Mammary epithelial cell (primary cell): ENCODE measurements at regions of chr17 and their contacts with region 1.

Region 1: GRCh38 chr17:81840826-81841778 is 6.3 kb upstream of the PPP1R27 start:
- DNase-seq: peak; percentile 87
- H3K4me3 ChIP-seq: peak overlapping the region in 2 of 3 experiments; percentile 18 to 29
- H3K27ac ChIP-seq: peak overlapping the region; percentile 37
- H3K4me1 ChIP-seq: peaks cover 35% of the 10 kb centered on the region
- H3K27me3 ChIP-seq: no peaks in the 10 kb centered on the region
- CTCF ChIP-seq: no peak

Region 2: GRCh38 chr17:81683584-81684237 is 157.4 kb before region 1 on chr17 and contains the starts of genes ARL16 and HGS:
- CTCF ChIA-PET with region 1: no interaction called
- dilution Hi-C with region 1: loop called (anchors 5 kb)
- in situ Hi-C with region 1: no loop called
- intact Hi-C with region 1: no loop called
- DNase-seq: peak; percentile 99
- H3K4me3 ChIP-seq: peak within 1 kb of the TSS; percentile 76 to 94 (median 92)
- H3K27ac ChIP-seq: peak within 1 kb of the TSS; percentile 78
- H3K4me1 ChIP-seq: peaks cover 19% of the 10 kb centered on the region
- H3K27me3 ChIP-seq: no peaks in the 10 kb centered on the region
- CTCF ChIP-seq: no peak
- total RNA-seq, gene ARL16: 19.5 to 27.7 TPM
- total RNA-seq, gene HGS: 88.0 to 140 TPM

Region 3: DNA sequence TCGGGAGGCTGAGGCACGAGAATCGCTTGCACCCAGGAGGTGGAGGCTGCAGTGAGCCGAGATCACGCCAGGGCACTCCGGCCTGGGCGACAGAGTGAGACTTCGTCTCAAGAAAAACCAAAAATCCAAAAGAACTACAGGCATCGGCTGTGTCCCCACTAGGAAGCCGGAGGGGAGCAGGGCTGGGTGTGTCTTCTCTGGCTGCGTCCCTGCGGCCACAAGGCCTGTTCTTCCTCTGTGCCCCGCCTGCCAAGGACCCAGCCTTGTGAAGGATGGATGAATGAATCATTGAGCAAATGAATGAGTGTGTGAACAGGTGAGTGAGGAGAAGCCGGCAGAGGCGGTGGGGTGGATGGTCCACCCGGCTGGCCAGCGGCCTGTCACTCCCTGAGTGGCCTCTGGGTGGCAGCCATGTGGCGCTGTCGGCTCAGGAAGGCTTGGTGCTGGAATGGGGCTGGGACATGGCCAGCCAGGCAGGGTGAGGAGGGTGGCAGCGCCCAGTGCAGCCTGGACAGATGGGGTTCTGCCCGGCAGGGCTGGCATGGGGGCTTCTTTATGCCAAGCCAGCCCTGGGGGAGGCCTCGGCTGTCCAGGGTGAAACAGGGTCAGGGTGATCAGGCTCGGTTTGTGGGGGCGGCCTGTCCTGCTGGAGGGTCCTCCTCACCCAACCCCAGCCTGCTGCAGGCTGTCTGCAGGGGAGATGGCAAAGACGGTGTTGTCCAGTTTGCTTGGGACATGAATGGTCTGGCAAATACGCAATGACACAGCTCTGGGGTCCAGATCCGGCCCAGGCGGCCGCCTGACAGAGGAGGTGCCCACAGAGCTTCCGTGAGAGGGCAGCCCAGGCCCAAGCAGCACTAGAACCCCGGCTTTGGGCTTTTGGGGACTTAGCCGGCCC is 107.3 kb before region 1 on chr17:
- CTCF ChIA-PET with region 1: no interaction called
- dilution Hi-C with region 1: no loop called
- in situ Hi-C with region 1: no loop called
- intact Hi-C with region 1: loop called (anchors 1 kb)
- DNase-seq: peak; percentile 63
- H3K4me3 ChIP-seq: no peak overlapping the region
- H3K27ac ChIP-seq: no peak overlapping the region
- H3K4me1 ChIP-seq: peaks cover 11% of the 10 kb centered on the region
- H3K27me3 ChIP-seq: no peaks in the 10 kb centered on the region
- CTCF ChIP-seq: peak; percentile 80 to 96

Region 4: GRCh38 chr17:81860756-81861518 is 19.8 kb after region 1 on chr17:
- CTCF ChIA-PET with region 1: no interaction called
- dilution Hi-C with region 1: no loop called
- in situ Hi-C with region 1: no loop called
- intact Hi-C with region 1: loop called (anchors 2 kb)
- DNase-seq: peak; percentile 100
- H3K4me3 ChIP-seq: peak overlapping the region; percentile 52 to 94 (median 79)
- H3K27ac ChIP-seq: peak overlapping the region; percentile 74
- H3K4me1 ChIP-seq: peaks cover 27% of the 10 kb centered on the region
- H3K27me3 ChIP-seq: no peaks in the 10 kb centered on the region
- CTCF ChIP-seq: no peak

Region 5: DNA sequence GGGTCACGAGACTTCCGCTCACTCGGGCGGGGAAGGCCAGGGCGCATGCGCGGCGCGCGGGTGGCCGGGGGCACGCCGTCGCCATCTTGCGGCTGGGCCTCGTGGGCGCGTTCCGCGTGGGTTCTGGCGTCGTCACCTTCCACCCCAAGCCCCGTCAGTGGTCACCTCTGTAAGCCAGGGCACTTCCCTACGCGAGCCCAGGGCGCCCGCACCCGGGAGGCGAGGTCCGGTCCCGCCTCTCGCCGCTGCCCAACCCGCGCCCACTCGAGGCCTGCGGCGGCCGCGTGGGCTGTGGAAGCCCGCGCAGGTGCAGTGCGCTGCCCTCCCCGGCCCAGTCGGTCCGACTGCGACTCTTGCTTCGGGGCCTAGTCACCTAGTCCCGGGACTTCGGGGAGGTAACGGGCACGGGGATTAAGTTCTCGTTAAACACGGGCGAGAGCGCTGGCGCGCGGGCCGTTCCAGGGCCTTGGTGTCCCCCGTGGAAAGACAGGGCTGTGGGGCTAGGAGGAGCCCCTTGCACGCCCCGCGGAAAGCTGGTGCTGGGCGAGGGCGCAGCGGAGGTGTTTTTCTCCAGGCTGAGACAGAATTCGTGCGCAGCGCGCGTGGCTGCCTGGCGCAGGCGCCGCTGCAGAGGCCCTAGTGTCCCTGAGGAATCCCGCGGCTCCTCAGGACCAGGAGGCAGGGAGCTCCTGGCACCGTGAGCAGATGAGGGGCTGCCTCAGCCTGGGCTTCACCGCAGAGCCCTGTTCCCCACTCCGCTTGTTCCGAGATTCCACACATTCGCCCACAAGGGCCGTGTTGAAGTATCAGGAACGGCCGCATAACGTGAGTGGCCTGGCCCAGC is 30.5 kb after region 1 on chr17:
- CTCF ChIA-PET with region 1: no interaction called
- dilution Hi-C with region 1: no loop called
- in situ Hi-C with region 1: no loop called
- intact Hi-C with region 1: no loop called
- DNase-seq: peak; percentile 82
- H3K4me3 ChIP-seq: peak overlapping the region; percentile 64 to 88 (median 75)
- H3K27ac ChIP-seq: peak overlapping the region; percentile 86
- H3K4me1 ChIP-seq: peaks cover 33% of the 10 kb centered on the region
- H3K27me3 ChIP-seq: no peaks in the 10 kb centered on the region
- CTCF ChIP-seq: peak in 1 of 2 donors; percentile 42

Region 6: DNA sequence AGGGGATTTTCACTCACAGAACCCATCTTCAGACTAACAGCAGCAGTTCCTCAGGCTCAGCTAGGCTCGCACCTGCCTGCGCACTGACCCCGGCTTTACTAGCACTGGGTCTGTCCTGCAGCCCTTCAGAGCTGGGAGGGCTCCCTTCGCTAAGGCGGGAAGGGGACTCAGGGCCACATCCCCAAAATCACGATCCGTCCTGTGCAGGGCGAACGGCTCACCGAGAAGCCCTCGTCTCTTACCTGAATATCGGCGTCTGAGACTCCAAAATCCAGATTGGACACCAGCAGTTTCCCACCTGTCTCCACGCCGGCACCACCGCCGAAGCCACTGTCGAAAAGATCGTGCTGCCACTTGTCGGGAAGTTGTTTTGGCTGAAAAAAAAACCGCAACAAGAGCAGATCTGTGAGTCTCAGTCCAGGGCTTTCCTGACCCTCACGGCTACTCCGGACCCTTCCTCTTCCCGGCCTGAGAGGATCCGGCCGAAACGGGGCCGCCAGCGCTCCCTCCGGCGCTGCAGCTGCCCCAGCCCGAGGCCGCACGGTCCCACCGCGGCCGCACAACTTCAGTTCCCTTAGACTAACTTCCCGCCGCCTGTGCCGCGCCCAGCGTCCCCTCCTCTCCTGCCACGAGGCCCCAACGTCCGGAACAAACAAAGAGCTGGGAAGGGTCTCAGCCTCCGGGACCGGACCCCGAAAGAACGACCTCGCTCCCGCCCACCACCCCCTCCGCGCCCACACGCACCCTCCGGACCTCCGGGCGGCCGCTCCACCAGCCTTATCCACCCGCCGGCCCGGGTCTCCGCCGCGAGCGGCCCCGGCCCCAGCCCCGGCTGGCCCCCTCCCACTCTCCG is 49.6 kb after region 1 on chr17:
- CTCF ChIA-PET with region 1: no interaction called
- dilution Hi-C with region 1: no loop called
- in situ Hi-C with region 1: no loop called
- intact Hi-C with region 1: no loop called
- DNase-seq: no peak
- H3K4me3 ChIP-seq: peak overlapping the region; percentile 80 to 88 (median 87)
- H3K27ac ChIP-seq: peak overlapping the region; percentile 77
- H3K4me1 ChIP-seq: peaks cover 21% of the 10 kb centered on the region
- H3K27me3 ChIP-seq: no peaks in the 10 kb centered on the region
- CTCF ChIP-seq: no peak

Region 7: DNA sequence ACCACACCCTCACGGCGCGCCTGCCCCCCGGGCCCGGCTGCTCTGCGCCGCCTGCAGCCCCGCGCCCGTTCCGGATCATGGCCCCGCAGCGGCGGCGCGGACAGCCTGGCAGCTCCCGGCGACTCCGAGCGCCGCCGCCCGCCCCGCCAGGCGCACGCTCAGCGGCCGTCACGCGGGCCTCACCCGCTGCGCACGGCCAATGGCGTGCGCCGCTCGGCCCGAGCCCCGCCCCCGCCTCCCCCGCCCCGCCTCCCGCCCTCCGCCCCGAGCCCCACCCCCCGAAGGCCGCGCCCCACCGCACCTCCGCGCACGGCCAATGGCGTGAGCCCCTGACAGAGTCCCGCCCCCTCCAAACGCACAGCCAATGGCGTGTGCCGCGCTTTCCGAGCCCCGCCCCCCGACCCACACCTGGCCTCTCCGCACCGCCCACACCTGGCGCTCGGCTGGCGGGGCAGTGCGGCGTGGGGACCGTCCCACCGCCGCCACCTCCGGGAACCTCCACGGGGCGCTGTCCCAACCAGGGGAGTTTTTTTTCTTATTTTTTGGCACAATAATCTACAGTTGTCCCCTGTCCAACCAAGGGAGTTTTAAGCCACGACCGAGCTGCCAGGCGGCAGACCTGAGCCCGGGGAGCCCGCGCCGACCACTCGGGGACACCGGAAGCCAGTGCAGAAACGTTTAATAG is 70.3 kb after region 1 on chr17 and contains the start of gene PCYT2:
- CTCF ChIA-PET with region 1: no interaction called
- dilution Hi-C with region 1: loop called (anchors 5 kb)
- in situ Hi-C with region 1: no loop called
- intact Hi-C with region 1: no loop called
- DNase-seq: peak; percentile 85
- H3K4me3 ChIP-seq: peak within 1 kb of the TSS; percentile 81 to 92 (median 83)
- H3K27ac ChIP-seq: peak within 1 kb of the TSS; percentile 19
- H3K4me1 ChIP-seq: peaks cover 12% of the 10 kb centered on the region
- H3K27me3 ChIP-seq: no peaks in the 10 kb centered on the region
- CTCF ChIP-seq: peak in 1 of 2 donors; percentile 2
- total RNA-seq, gene PCYT2: 23.5 to 48.7 TPM

Region 8: GRCh38 chr17:81952792-81953228 is 111.7 kb after region 1 on chr17:
- CTCF ChIA-PET with region 1: no interaction called
- dilution Hi-C with region 1: loop called (anchors 5 kb)
- in situ Hi-C with region 1: no loop called
- intact Hi-C with region 1: no loop called
- DNase-seq: no peak
- H3K4me3 ChIP-seq: no peak overlapping the region
- H3K27ac ChIP-seq: no peak overlapping the region
- H3K4me1 ChIP-seq: no peaks in the 10 kb centered on the region
- H3K27me3 ChIP-seq: no peaks in the 10 kb centered on the region
- CTCF ChIP-seq: no peak

Region 9: GRCh38 chr17:82037113-82037888 is 196.2 kb after region 1 on chr17 and contains the start of gene DCXR:
- CTCF ChIA-PET with region 1: no interaction called
- dilution Hi-C with region 1: no loop called
- in situ Hi-C with region 1: no loop called
- intact Hi-C with region 1: no loop called
- DNase-seq: peak; percentile 96
- H3K4me3 ChIP-seq: peak within 1 kb of the TSS; percentile 68 to 84 (median 73)
- H3K27ac ChIP-seq: peak within 1 kb of the TSS; percentile 31
- H3K4me1 ChIP-seq: peaks cover 16% of the 10 kb centered on the region
- H3K27me3 ChIP-seq: no peaks in the 10 kb centered on the region
- CTCF ChIP-seq: peak; percentile 50 to 80
- total RNA-seq, gene DCXR: 27.7 to 68.9 TPM